ENCODE measurements at regions of chr12 and their contacts with region 1.

Region 1: DNA sequence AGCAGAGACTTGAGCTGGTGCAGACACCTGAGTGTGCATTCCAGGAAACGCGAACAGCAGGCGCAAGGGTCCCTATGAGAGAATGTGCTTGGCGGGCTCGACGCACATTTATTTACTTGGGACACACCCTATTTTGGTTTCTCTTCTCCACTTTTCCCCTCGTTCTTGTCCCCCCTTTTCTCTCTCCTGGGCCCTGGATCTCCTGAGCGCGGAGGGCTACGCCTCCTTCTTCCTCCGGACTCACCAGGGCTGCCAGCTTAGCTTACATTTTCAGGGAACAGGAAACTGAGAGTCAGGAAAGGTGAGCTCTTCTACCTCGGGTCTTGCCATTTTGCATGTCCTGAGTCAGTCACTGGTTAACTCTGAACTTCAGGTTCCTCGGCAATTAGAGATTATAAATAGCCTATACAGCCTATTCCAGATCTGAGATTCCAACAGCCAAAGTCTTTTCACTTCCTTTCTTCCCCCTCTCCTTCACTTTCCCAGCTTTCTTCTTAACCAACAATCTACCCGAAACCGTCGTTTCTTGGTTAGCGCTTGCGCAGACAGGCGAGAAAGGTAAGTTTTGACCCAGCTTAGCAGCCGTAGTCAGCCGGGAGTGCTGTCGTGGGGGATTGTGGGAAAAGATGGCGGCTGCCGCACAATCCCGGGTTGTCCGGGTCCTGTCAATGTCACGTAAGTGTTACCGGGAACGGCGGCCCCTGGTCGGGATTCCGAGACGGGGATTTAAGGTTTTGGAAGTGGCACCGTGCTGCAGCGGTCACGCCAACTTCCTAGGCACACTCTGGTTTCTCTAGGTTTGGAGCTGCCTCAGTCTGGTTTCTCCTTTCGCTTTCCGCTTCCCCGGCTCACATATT is at the starts of genes AKAP3 and NDUFA9:
- DNase-seq: peak; percentile 94
- total RNA-seq, gene AKAP3: 2.6 TPM
- total RNA-seq, gene NDUFA9: 268 TPM

Region 2: GRCh38 chr12:4538207-4539160 is 110.2 kb before region 1 on chr12 and contains the start of gene RAD51AP1:
- intact Hi-C with region 1: loop called (anchors 1 kb)
- DNase-seq: peak; percentile 98
- total RNA-seq, gene RAD51AP1: 1.6 TPM

Region 3: GRCh38 chr12:4604684-4605193 is 44.0 kb before region 1 on chr12:
- intact Hi-C with region 1: loop called (anchors 2 kb)
- DNase-seq: peak; percentile 89

Region 4: DNA sequence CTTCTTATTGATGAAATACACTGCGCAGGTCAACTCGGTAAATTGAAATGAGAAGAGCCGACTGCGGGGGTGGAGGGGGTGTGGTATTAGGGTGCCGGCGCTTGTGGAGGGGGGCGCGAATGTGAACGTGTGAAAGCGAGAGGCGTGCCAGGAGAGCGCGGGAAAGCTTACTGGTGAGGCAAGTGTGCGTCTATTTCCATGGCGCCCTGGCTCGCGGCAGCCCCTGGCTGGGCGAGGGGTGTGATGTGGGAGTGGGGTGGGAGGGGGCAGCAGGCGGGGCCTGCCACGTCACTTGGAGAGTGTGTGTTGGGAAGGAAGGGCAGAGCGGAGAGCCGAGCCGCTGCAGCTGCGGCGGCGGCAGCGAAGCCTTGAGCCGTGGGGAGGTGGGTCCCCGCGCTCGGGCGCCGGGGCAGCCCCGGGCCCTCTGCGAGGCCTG is 160.3 kb after region 1 on chr12:
- intact Hi-C with region 1: no loop called
- DNase-seq: no peak

Region 5: DNA sequence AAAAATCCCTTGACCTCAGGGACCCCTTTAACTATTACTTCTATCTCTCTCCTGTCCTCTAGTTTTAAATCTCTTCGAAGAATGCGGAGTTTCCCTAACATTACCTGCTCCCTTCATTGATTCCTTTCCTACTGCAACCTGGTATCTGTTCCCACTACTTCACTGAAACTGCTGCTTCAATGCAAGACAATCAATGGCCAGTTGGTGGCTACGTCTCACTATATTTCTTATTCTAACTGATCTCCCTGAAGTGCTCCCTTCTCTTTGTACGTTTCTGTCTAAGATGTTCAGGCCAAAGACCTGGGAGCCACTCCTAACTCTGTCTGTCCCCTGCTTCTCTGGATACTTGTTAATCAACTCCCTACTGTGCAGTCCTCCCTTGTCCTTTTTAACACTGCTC is 250.6 kb after region 1 on chr12:
- intact Hi-C with region 1: no loop called
- DNase-seq: no peak